ENCODE measurements at regions of chr17 and their contacts with region 1.

Region 1: GRCh38 chr17:10618202-10618635 is 38.9 kb downstream of the MYH3 start:
- DNase-seq: peak; percentile 58 to 80 (median 71)
- ATAC-seq: peak; percentile 89 to 90
- H3K4me3 ChIP-seq: no peak overlapping the region
- H3K27ac ChIP-seq: no peak overlapping the region
- H3K4me1 ChIP-seq: no peaks in the 10 kb centered on the region
- H3K27me3 ChIP-seq: no peaks in the 10 kb centered on the region

Region 2: GRCh38 chr17:9924735-9925191 is 693.5 kb before region 1 on chr17:
- intact Hi-C with region 1: loop called (anchors 5 to 10 kb)
- DNase-seq: no peak
- ATAC-seq: peak; percentile 42 to 66
- H3K4me3 ChIP-seq: no peak overlapping the region
- H3K27ac ChIP-seq: no peak overlapping the region
- H3K4me1 ChIP-seq: no peaks in the 10 kb centered on the region
- H3K27me3 ChIP-seq: no peaks in the 10 kb centered on the region

Region 3: DNA sequence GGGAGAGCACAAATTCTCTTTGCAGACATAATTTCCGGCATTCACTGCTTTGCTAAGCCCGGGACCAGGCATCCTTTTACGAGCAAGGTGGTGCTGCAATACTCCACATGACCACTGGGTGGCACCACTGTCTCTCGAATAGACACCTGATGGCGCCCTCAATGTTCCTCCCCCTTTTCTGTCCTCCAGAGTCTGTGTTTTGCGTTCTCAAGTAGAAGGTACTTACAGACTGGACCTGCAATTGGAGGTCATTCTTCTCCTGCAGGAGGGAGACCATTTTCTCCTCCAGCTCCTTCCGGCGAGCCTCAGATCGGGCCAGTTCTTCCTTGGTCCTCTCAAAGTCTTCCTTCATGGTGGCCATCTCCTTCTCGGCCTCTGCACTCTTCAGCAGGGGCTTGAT is 290.6 kb before region 1 on chr17:
- intact Hi-C with region 1: loop called in 3 of 4 experiments (anchors 5 to 10 kb)
- DNase-seq: peak; percentile 78 to 92 (median 86)
- ATAC-seq: peak; percentile 48 to 72
- H3K4me3 ChIP-seq: no peak overlapping the region
- H3K27ac ChIP-seq: no peak overlapping the region
- H3K4me1 ChIP-seq: no peaks in the 10 kb centered on the region
- H3K27me3 ChIP-seq: no peaks in the 10 kb centered on the region

Region 4: DNA sequence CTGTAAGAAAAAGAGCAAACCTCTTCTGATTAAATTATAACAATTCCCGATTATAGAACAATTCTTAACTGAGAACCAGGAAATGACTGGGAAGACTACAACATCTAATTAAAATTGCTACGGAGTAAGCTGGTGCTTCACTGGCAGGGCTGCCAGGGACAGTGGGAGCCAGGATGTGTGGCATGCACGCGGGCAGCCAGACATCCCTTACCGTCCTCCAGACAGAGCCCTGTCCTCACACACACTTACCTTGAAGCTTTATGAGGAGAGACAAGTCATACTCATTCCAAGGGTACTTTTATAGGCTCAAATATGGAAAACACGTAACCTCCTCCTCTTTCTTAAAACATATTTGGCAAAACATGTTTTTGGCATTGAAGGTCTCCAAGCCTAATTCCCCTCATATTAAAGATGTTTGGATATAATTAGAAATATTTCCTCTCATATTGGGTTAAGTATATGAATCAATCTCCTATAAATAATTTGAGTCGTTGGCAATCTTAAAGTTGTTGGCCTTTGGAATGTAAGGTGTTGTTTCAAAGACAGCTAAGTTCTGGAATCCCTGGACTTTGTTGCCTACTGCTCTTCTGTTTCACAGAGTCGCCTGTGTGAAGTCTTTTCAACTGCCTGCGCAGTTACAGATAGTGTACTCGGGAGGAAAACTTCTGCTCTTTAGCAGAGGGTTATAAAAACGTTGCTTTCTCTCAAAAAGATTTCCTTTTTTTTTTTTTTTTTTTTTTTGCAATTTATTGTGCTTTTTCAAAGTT is 99.8 kb before region 1 on chr17 and contains the start of gene MYH1:
- intact Hi-C with region 1: no loop called
- DNase-seq: no peak
- ATAC-seq: no peak
- H3K4me3 ChIP-seq: no peak within 1 kb of the TSS
- H3K27ac ChIP-seq: no peak within 1 kb of the TSS
- H3K4me1 ChIP-seq: no peaks in the 10 kb centered on the region
- H3K27me3 ChIP-seq: no peaks in the 10 kb centered on the region
- total RNA-seq, gene MYH1: 0.06 to 0.25 TPM in 2 of 4 donors, not detected in the others

Region 5: GRCh38 chr17:10532026-10532425 is 86.2 kb before region 1 on chr17:
- intact Hi-C with region 1: no loop called
- DNase-seq: no peak
- ATAC-seq: no peak
- H3K4me3 ChIP-seq: no peak overlapping the region
- H3K27ac ChIP-seq: no peak overlapping the region
- H3K4me1 ChIP-seq: no peaks in the 10 kb centered on the region
- H3K27me3 ChIP-seq: no peaks in the 10 kb centered on the region

Measured in right cardiac atrium (tissue), 5 donors.